ENCODE measurements at regions of chr6 and their contacts with region 1.

Region 1: GRCh38 chr6:4210629-4211423 is 75.5 kb upstream of the ECI2 start:
- DNase-seq: peak; percentile 74
- H3K4me3 ChIP-seq: no peak overlapping the region
- H3K27ac ChIP-seq: no peak overlapping the region
- H3K4me1 ChIP-seq: no peaks in the 10 kb centered on the region
- H3K27me3 ChIP-seq: peaks cover under 1 to 3% of the 10 kb centered on the region in 2 experiments
- CTCF ChIP-seq: peak; percentile 72 to 80
- POLR2A ChIP-seq: no peak

Region 2: DNA sequence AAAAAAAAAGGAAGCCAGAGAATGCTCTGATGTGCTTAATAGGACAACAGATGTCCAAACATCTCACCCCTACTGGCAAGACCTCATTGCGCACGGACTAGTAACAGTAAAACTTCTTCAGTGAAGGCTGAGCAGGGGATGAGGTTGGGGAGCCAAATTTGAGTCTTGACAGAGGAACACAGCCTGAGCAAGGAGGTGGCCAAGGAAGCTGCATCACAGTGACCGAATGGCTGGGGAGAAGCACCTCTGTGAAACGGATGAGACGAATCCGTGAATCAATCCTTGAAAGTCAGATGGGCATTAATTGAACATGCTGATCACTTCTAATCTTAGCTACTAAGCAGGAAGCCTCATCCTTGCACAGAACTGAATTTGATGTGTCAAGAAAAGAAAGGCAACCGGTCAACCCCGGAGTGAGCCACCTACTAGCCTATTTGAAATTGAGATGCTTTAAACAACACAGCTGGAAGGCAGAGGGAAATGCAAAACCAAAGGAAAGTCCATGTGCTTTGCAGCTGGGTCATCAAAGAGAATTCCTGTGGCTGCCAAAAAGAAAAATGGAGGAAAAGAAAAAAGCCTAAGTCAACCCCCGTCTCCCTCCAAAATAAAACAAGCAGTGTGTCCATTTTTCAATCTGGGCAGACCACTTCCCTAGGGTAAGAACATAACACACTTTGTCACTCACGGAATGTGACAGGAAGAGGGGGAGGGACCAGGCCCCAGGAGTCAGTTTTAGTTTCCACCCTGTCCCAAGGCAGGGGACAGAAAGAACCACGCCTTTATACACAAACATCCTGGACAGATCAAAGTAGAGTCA is 488.8 kb before region 1 on chr6:
- CTCF ChIA-PET with region 1: no interaction called
- POLR2A ChIA-PET with region 1: no interaction called
- dilution Hi-C with region 1: no loop called
- intact Hi-C with region 1: no loop called
- DNase-seq: no peak
- H3K4me3 ChIP-seq: no peak overlapping the region
- H3K27ac ChIP-seq: no peak overlapping the region
- H3K4me1 ChIP-seq: no peaks in the 10 kb centered on the region
- H3K27me3 ChIP-seq: no peaks in the 10 kb centered on the region
- CTCF ChIP-seq: no peak
- POLR2A ChIP-seq: no peak

Region 3: DNA sequence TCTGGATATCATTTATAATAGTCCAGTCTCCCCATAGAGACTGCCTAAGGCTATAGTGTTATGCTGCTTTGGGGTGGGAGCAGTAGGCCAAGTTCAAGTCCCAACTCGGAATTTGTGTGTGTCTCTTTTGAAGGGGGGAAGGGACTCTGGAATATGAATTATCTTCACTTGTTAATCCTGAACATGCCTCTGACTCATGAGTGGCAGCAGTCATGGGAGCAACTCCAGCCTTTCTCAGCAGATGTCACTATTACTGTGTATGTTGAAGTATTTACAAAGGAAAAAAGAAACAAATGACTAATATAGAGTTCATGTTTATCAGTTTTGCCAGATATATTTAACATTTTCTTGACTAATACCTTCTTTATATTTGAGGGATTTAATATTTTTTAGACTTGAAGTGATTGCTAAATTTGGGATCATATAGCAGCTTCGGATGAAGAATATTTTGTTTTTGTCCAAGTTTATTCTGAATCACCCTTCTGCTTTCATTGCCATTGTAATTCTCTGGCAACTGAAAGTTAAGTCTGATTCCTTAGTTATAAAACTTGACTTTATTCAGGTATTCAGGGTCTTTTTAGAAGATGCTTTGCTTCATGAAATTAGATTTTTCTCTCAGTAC is 155.3 kb before region 1 on chr6:
- CTCF ChIA-PET with region 1: interaction called, 67 read pairs
- POLR2A ChIA-PET with region 1: no interaction called
- dilution Hi-C with region 1: no loop called
- intact Hi-C with region 1: loop called (anchors 1 kb)
- DNase-seq: peak; percentile 92
- H3K4me3 ChIP-seq: no peak overlapping the region
- H3K27ac ChIP-seq: peak overlapping the region; percentile 41
- H3K4me1 ChIP-seq: peaks cover 22% of the 10 kb centered on the region
- H3K27me3 ChIP-seq: no peaks in the 10 kb centered on the region
- CTCF ChIP-seq: peak; percentile 44 to 59
- POLR2A ChIP-seq: no peak

Region 4: DNA sequence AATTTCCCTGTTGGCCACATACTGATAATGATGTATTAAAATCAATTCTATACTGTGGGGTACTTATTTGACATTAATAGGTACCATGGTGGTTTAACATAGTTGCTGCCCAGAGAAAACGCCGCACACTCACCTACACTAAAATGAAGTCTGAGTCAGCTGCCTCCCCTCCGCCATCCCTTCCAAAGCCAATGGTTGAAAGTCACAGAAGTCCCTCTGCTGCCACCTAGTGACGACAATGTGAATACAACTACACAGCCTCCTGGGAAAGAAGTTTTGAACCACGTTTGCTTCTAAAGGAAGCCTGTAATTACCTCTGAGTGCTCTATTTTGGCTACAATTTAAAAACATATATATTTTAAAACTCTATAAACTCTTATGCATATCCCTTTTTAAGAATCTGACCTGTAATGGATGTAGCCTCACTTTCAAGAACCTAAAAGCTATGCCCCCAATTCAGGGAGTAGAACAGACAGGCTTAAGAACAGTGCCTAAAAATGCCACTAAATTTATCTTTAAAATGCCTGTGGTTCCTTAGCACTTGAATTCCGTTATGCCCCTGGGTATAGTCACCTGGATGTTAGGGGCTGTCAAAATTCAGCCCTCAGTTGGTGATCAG is 54.9 kb before region 1 on chr6:
- CTCF ChIA-PET with region 1: interaction called, 13 read pairs
- POLR2A ChIA-PET with region 1: no interaction called
- dilution Hi-C with region 1: no loop called
- intact Hi-C with region 1: no loop called
- DNase-seq: peak; percentile 84
- H3K4me3 ChIP-seq: no peak overlapping the region
- H3K27ac ChIP-seq: no peak overlapping the region
- H3K4me1 ChIP-seq: peaks cover 2% of the 10 kb centered on the region
- H3K27me3 ChIP-seq: no peaks in the 10 kb centered on the region
- CTCF ChIP-seq: peak; percentile 73 to 77
- POLR2A ChIP-seq: no peak

Region 5: DNA sequence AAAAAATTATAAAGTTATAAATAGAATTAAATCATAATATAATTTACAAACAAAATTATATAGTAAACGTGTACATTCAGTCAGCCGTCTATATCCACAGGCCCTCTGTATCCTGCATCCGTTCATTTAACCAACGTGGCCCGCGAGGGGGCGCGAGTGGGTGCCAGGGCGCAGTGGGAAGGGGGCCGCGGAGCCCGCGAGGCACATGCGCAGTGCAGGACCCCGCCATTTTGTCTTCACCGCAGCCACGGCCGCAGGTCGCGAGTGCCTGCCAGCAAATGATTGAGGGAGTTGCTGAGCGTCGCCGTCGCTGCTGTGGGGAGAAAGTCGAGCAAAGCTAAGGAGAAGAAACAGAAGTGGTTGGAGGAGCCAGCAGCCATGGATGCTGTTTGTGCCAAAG is 22.0 kb before region 1 on chr6:
- CTCF ChIA-PET with region 1: interaction called, 13 read pairs
- POLR2A ChIA-PET with region 1: no interaction called
- dilution Hi-C with region 1: no loop called
- intact Hi-C with region 1: no loop called
- DNase-seq: no peak
- H3K4me3 ChIP-seq: no peak overlapping the region
- H3K27ac ChIP-seq: no peak overlapping the region
- H3K4me1 ChIP-seq: no peaks in the 10 kb centered on the region
- H3K27me3 ChIP-seq: peaks cover 4% of the 10 kb centered on the region in 2 experiments
- CTCF ChIP-seq: no peak
- POLR2A ChIP-seq: no peak